ENCODE measurements at regions of chr1 and their contacts with region 1.

Region 1: GRCh38 chr1:36385410-36386257 is at the start of gene STK40:
- DNase-seq: peak; percentile 99
- H3K4me3 Mint-ChIP-seq: peak within 1 kb of the TSS; percentile 93
- H3K27ac Mint-ChIP-seq: peak within 1 kb of the TSS; percentile 100
- H3K4me1 Mint-ChIP-seq: peaks cover 56% of the 10 kb centered on the region
- H3K27me3 Mint-ChIP-seq: no peaks in the 10 kb centered on the region
- total RNA-seq, gene STK40: 57.3 to 57.4 TPM

Region 2: DNA sequence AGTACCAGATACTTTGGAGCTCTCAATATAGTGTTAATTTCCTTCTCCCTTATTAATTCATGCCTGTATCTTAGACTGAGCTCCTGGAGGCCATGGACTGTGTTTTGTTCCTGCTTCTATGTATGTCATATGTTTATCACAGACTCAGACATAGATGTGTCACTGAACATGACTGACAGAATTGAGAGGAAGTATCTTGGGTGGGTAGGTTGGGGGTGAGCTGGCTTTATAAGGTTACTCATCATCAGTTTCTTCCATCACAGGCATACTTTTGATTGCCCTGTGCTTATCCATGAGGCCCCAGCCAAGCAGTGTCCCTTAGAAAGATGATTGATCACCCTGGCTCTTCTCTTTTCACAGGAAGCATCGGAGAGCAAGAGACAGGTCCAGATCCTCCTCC is 85.1 kb before region 1 on chr1:
- CTCF ChIA-PET with region 1: interaction called, 9 read pairs
- POLR2A ChIA-PET with region 1: interaction called, 11 read pairs
- intact Hi-C with region 1: loop called (anchors 1 kb)
- DNase-seq: peak; percentile 44
- H3K4me3 Mint-ChIP-seq: peak overlapping the region; percentile 3
- H3K27ac Mint-ChIP-seq: peak overlapping the region; percentile 95
- H3K4me1 Mint-ChIP-seq: peaks cover 61% of the 10 kb centered on the region
- H3K27me3 Mint-ChIP-seq: no peaks in the 10 kb centered on the region

Region 3: GRCh38 chr1:36342481-36343478 is 42.9 kb before region 1 on chr1:
- CTCF ChIA-PET with region 1: interaction called, 11 read pairs
- POLR2A ChIA-PET with region 1: no interaction called
- intact Hi-C with region 1: no loop called
- DNase-seq: peak; percentile 70
- H3K4me3 Mint-ChIP-seq: no peak overlapping the region
- H3K27ac Mint-ChIP-seq: no peak overlapping the region
- H3K4me1 Mint-ChIP-seq: peaks cover 16% of the 10 kb centered on the region
- H3K27me3 Mint-ChIP-seq: no peaks in the 10 kb centered on the region

Region 4: GRCh38 chr1:36397378-36398230 is 12.0 kb after region 1 on chr1 and contains the start of gene LSM10:
- CTCF ChIA-PET with region 1: interaction called, 9 read pairs
- POLR2A ChIA-PET with region 1: interaction called, 84 read pairs
- intact Hi-C with region 1: loop called (anchors 1 kb)
- DNase-seq: peak; percentile 95
- H3K4me3 Mint-ChIP-seq: peak within 1 kb of the TSS; percentile 98
- H3K27ac Mint-ChIP-seq: peak within 1 kb of the TSS; percentile 84
- H3K4me1 Mint-ChIP-seq: peaks cover 28% of the 10 kb centered on the region
- H3K27me3 Mint-ChIP-seq: no peaks in the 10 kb centered on the region
- total RNA-seq, gene LSM10: 46.0 to 47.0 TPM

Region 5: GRCh38 chr1:36420836-36421664 is 35.4 kb after region 1 on chr1:
- CTCF ChIA-PET with region 1: interaction called, 3 read pairs
- POLR2A ChIA-PET with region 1: no interaction called
- intact Hi-C with region 1: loop called (anchors 1 kb)
- DNase-seq: peak; percentile 96
- H3K4me3 Mint-ChIP-seq: no peak overlapping the region
- H3K27ac Mint-ChIP-seq: peak overlapping the region; percentile 90
- H3K4me1 Mint-ChIP-seq: peaks cover 21% of the 10 kb centered on the region
- H3K27me3 Mint-ChIP-seq: no peaks in the 10 kb centered on the region